Dendritic cell treated with granulocyte-macrophage colony-stimulating factor and Interleukin-4, amounts not matched to agents 40 ng/mL and 50 ng/mL, for 4 days (primary cell): ENCODE measurements at regions of chr1 and their contacts with region 1.

Region 1: GRCh38 chr1:158830904-158831507 is at the start of gene MNDA:
- H3K4me3 Mint-ChIP-seq: peak within 1 kb of the TSS; percentile 69
- H3K27ac Mint-ChIP-seq: peak within 1 kb of the TSS; percentile 83
- H3K4me1 Mint-ChIP-seq: peaks cover 35% of the 10 kb centered on the region
- H3K27me3 Mint-ChIP-seq: no peaks in the 10 kb centered on the region

Region 2: GRCh38 chr1:158654571-158654970 is 176.4 kb before region 1 on chr1:
- intact Hi-C with region 1: loop called (anchors 5 kb)
- H3K4me3 Mint-ChIP-seq: peak overlapping the region; percentile 18
- H3K27ac Mint-ChIP-seq: peak overlapping the region; percentile 42
- H3K4me1 Mint-ChIP-seq: peaks cover 19% of the 10 kb centered on the region
- H3K27me3 Mint-ChIP-seq: peaks cover 2% of the 10 kb centered on the region

Region 3: DNA sequence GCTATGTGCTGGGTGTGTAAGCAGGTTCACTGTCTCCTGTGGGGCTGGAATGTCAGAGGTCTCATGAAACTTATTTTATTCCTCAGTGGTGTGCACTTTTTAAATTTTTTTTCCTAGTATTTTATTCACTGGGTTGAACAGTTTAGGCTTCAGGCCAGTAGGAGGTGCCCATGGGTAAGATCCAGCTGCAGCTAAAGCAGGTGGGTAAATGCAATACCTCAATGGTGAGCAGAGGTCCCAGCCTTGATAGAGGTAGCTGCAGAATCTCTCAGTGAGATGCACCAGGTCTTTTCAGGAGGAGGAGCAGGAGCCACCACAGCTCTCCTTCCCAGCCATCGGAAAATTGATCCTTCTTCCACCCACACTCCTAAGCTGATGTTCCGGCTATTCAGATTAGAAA is 37.4 kb before region 1 on chr1:
- intact Hi-C with region 1: no loop called
- H3K4me3 Mint-ChIP-seq: no peak overlapping the region
- H3K27ac Mint-ChIP-seq: no peak overlapping the region
- H3K4me1 Mint-ChIP-seq: peaks cover 44% of the 10 kb centered on the region
- H3K27me3 Mint-ChIP-seq: no peaks in the 10 kb centered on the region

Region 4: DNA sequence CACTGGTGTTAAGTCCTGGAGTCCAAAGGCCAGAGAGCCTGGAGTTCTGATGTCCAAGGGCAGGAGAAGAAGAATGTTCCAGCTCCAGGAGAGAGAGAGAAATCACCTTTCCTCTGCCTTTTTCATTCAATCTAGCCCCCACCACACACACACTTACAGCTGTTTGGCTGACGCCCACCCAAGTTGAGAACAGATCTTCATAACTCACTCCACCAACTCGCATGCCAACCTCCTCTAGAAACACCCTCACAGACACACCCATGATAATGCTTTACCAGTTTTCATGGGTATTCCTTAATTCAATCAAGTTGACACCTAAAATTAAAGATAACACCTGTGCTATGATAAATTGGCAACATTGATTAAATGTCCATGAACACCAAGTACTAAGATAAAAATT is 42.1 kb after region 1 on chr1:
- intact Hi-C with region 1: no loop called
- H3K4me3 Mint-ChIP-seq: no peak overlapping the region
- H3K27ac Mint-ChIP-seq: no peak overlapping the region
- H3K4me1 Mint-ChIP-seq: no peaks in the 10 kb centered on the region
- H3K27me3 Mint-ChIP-seq: no peaks in the 10 kb centered on the region

Region 5: DNA sequence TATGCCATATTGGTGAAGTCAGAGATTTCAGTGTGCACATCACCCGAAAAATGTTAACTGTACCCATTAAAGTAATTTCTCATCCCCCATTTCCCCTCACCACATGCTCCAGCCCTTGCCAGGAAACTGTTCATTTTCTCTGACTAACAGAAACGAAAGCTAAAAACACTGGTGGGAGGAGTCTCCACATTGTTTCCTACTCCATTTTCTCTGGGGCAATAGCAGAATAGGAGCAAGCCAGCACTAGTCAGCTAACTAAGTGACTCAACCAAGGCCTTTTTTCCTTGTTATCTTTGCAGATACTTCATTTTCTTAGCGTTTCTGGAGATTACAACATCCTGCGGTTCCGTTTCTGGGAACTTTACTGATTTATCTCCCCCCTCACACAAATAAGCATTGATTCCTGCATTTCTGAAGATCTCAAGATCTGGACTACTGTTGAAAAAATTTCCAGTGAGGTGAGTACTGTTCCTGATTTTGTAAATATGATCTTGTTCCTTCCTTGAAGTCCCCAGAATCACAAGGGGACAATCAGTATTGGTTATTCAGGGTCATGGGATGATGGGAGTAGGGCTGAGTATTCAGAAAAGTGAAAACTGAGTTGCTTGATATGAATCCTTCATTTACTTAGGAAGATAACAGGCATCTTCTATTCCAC is 178.8 kb after region 1 on chr1 and contains the start of gene IFI16:
- intact Hi-C with region 1: loop called (anchors 10 kb)
- H3K4me3 Mint-ChIP-seq: peak within 1 kb of the TSS; percentile 83
- H3K27ac Mint-ChIP-seq: peak within 1 kb of the TSS; percentile 95
- H3K4me1 Mint-ChIP-seq: peaks cover 68% of the 10 kb centered on the region
- H3K27me3 Mint-ChIP-seq: no peaks in the 10 kb centered on the region